Thyroid gland (tissue), 4 donors: ENCODE measurements at regions of chr12 and their contacts with region 1.

Region 1: GRCh38 chr12:116599285-116600136 is 40.3 kb downstream of the MAP1LC3B2 start:
- DNase-seq: peak; percentile 88
- H3K4me3 ChIP-seq: no peak overlapping the region
- H3K27ac ChIP-seq: peak overlapping the region; percentile 57 to 83 (median 77)
- H3K4me1 ChIP-seq: peaks cover 21 to 44% of the 10 kb centered on the region in 2 donors
- H3K27me3 ChIP-seq: no peaks in the 10 kb centered on the region
- CTCF ChIP-seq: peak; percentile 31 to 83 (median 46)
- POLR2A ChIP-seq: peak in 1 of 2 donors; percentile 39

Region 2: GRCh38 chr12:116002890-116003536 is 596.5 kb before region 1 on chr12:
- intact Hi-C with region 1: loop called (anchors 5 kb)
- DNase-seq: no peak
- H3K4me3 ChIP-seq: no peak overlapping the region
- H3K27ac ChIP-seq: no peak overlapping the region
- H3K4me1 ChIP-seq: peaks cover 13 to 17% of the 10 kb centered on the region in 2 donors
- H3K27me3 ChIP-seq: no peaks in the 10 kb centered on the region
- CTCF ChIP-seq: no peak
- POLR2A ChIP-seq: no peak

Region 3: GRCh38 chr12:116277393-116278278 is 321.9 kb before region 1 on chr12 and contains the start of gene MED13L:
- intact Hi-C with region 1: loop called (anchors 5 kb)
- DNase-seq: peak; percentile 84 to 88
- H3K4me3 ChIP-seq: peak within 1 kb of the TSS; percentile 13 to 91 (median 49)
- H3K27ac ChIP-seq: peak within 1 kb of the TSS; percentile 79 to 93 (median 90)
- H3K4me1 ChIP-seq: peaks cover 22% of the 10 kb centered on the region in 2 donors
- H3K27me3 ChIP-seq: no peaks in the 10 kb centered on the region
- CTCF ChIP-seq: peak in 3 of 6 experiments; percentile 23 to 71 (median 42)
- POLR2A ChIP-seq: peak in 1 of 2 donors; percentile 55
- total RNA-seq, gene MED13L: 168 to 349 (median 246) TPM

Region 4: GRCh38 chr12:116547955-116548501 is 51.5 kb before region 1 on chr12:
- intact Hi-C with region 1: loop called (anchors 10 kb)
- DNase-seq: no peak
- H3K4me3 ChIP-seq: no peak overlapping the region
- H3K27ac ChIP-seq: no peak overlapping the region
- H3K4me1 ChIP-seq: peaks cover 5 to 15% of the 10 kb centered on the region in 2 donors
- H3K27me3 ChIP-seq: no peaks in the 10 kb centered on the region
- CTCF ChIP-seq: no peak
- POLR2A ChIP-seq: no peak

Region 5: GRCh38 chr12:116662612-116663144 is 63.2 kb after region 1 on chr12:
- intact Hi-C with region 1: loop called (anchors 5 kb)
- DNase-seq: peak; percentile 49 to 56
- H3K4me3 ChIP-seq: no peak overlapping the region
- H3K27ac ChIP-seq: peak overlapping the region in 2 of 3 donors; percentile 11 to 31
- H3K4me1 ChIP-seq: peaks cover 24 to 41% of the 10 kb centered on the region in 2 donors
- H3K27me3 ChIP-seq: no peaks in the 10 kb centered on the region
- CTCF ChIP-seq: no peak
- POLR2A ChIP-seq: no peak